ENCODE measurements at regions of chr17 and their contacts with region 1.

Region 1: DNA sequence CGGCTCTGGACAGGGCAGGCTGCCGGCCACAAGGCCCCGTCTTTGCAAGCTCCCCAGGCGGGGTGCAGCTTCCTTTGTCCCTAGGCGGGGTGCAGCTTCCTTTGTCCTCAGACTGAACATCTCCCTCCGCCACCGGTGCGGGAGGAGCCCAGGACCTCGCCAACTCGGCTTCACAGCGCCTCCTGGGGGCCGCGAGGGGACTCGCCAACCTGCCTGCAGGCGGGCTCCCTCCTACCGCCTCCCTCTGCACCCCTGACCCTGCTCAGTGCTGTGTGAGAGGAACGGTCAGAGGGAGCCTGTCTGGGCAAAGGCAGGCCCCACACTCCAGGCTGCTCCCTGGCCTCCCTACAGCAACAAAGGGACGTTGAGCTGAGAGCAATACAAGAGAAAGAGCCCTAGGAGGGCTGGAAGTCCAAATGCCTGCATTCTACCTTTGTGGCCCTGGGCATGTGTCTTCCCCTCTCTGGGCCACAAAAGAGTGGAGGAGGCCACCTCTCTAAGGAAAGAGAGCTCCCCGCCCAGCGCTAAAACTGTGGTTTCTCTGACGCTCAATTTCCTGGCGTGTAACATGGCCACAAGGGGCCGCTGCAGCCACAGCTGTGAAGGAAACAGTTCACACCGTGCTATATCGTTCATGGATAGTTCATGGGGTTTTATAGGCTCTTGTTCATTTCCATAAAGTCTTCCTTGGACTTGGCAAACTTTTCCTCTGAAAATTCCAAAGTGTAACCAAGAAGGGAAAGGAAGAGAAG is 20.9 kb upstream of the KRT19 start:
- H3K4me3 ChIP-seq: no peak overlapping the region
- H3K27ac ChIP-seq: peak overlapping the region; percentile 38
- H3K4me1 ChIP-seq: no peaks in the 10 kb centered on the region
- CTCF ChIP-seq: peak; percentile 80

Region 2: GRCh38 chr17:40810505-40810904 is 738.5 kb before region 1 on chr17:
- CTCF ChIA-PET with region 1: interaction called, 22 read pairs
- POLR2A ChIA-PET with region 1: no interaction called
- H3K4me3 ChIP-seq: no peak overlapping the region
- H3K27ac ChIP-seq: no peak overlapping the region
- H3K4me1 ChIP-seq: no peaks in the 10 kb centered on the region; the same call in 1 of the 2 replicates
- CTCF ChIP-seq: no peak

Region 3: GRCh38 chr17:40909351-40909750 is 639.7 kb before region 1 on chr17:
- CTCF ChIA-PET with region 1: interaction called, 25 read pairs
- POLR2A ChIA-PET with region 1: interaction called, 4 read pairs
- H3K4me3 ChIP-seq: no peak overlapping the region
- H3K27ac ChIP-seq: no peak overlapping the region
- H3K4me1 ChIP-seq: peaks cover 6% of the 10 kb centered on the region; the same call in 1 of the 2 replicates
- CTCF ChIP-seq: peak; percentile 45; the same call in 1 of the 2 replicates

Region 4: GRCh38 chr17:41403798-41404671 is 145.0 kb before region 1 on chr17:
- CTCF ChIA-PET with region 1: interaction called, 11 read pairs
- POLR2A ChIA-PET with region 1: no interaction called
- H3K4me3 ChIP-seq: no peak overlapping the region
- H3K27ac ChIP-seq: no peak overlapping the region
- H3K4me1 ChIP-seq: peaks cover 13% of the 10 kb centered on the region
- CTCF ChIP-seq: no peak

Region 5: GRCh38 chr17:41521574-41522261 is 27.3 kb before region 1 on chr17:
- CTCF ChIA-PET with region 1: interaction called, 25 read pairs
- POLR2A ChIA-PET with region 1: interaction called, 4 read pairs
- H3K4me3 ChIP-seq: no peak overlapping the region
- H3K27ac ChIP-seq: no peak overlapping the region; the same call in 1 of the 2 replicates
- H3K4me1 ChIP-seq: peaks cover 23% of the 10 kb centered on the region
- CTCF ChIP-seq: no peak

Region 6: GRCh38 chr17:41567317-41567716 is 18.3 kb after region 1 on chr17:
- CTCF ChIA-PET with region 1: interaction called, 75 read pairs
- POLR2A ChIA-PET with region 1: no interaction called
- H3K4me3 ChIP-seq: no peak overlapping the region
- H3K27ac ChIP-seq: no peak overlapping the region
- H3K4me1 ChIP-seq: no peaks in the 10 kb centered on the region
- CTCF ChIP-seq: no peak

Region 7: DNA sequence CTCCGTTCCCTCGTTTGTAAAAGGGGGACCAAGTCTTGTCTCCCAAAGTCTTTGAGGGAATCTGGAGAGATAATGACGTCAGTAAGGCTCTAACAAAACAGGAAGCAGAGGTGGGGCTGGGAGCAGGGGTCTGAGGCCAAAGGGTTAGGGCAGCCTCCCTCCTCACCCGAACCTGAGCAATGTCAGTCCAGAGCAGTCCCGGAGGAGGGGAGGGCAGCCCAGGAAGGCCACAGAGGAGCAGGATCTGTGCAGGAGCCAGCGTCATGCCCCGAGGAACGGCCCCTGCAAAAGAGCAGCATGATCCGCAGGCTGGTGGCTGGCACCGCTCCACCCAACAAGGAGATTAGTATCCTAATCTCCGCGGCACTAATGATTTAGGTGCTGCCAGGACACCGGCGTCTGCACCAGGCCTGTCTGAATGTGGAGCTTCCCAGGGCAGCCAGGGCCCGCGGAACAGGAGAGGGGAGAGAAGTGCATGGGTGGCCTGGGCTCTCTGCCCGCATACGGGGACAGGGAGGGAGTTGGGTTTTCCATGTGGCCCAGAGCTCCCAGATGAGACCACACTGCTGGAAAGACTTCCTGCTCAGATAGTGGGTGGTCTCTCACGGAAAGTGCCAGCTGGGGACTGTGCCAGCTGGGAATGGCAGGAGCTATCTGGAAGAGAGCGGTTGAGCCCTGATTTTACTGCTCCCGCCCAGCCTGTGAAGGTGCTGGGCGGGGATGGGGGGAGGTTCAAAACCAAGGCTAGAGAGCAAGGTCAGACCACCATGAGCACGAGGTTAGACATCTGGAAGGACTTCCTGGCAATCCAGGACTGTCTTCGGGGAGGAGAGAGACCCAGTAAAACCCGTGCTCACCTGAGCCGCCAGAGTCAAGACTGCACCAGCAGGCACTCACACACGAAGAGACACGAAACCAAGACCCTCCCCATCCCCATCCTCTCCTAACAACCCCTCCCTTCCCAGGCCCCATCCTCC is 86.4 kb after region 1 on chr17:
- CTCF ChIA-PET with region 1: interaction called, 16 read pairs
- POLR2A ChIA-PET with region 1: no interaction called
- H3K4me3 ChIP-seq: no peak overlapping the region
- H3K27ac ChIP-seq: no peak overlapping the region
- H3K4me1 ChIP-seq: no peaks in the 10 kb centered on the region
- CTCF ChIP-seq: no peak

Region 8: GRCh38 chr17:41738077-41738735 is 189.2 kb after region 1 on chr17:
- CTCF ChIA-PET with region 1: no interaction called
- POLR2A ChIA-PET with region 1: no interaction called
- H3K4me3 ChIP-seq: no peak overlapping the region
- H3K27ac ChIP-seq: peak overlapping the region; percentile 11; the same call in 1 of the 2 replicates
- H3K4me1 ChIP-seq: peaks cover 2% of the 10 kb centered on the region; the same call in 1 of the 2 replicates
- CTCF ChIP-seq: peak; percentile 96

Measured in HEK293 (cell line).